ENCODE measurements at regions of chr6 and their contacts with region 1.

Region 1: DNA sequence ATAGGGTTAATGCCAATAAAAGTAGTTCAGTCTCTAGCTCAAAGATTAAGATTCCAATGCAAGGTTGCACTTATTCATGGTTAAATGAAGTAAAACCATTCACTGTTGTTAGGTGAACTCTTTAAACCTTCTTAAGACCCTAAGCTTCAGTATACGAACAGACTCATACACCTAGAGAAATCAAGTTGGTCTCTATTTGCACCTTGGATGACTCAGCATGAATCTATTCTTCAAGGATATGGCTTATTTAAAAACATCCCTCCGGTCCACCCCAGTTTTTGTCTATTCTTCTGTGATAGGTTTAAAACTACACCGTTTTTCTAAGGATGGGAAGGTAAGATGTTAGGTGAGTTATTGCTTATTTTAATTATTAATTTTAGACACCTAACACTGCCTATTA is 932 bp upstream of the TAAR9 start:
- DNase-seq: no peak
- H3K4me3 ChIP-seq: no peak overlapping the region
- H3K27ac ChIP-seq: no peak overlapping the region
- H3K4me1 ChIP-seq: no peaks in the 10 kb centered on the region
- H3K27me3 ChIP-seq: no peaks in the 10 kb centered on the region
- CTCF ChIP-seq: no peak
- POLR2A ChIP-seq: no peak

Region 2: DNA sequence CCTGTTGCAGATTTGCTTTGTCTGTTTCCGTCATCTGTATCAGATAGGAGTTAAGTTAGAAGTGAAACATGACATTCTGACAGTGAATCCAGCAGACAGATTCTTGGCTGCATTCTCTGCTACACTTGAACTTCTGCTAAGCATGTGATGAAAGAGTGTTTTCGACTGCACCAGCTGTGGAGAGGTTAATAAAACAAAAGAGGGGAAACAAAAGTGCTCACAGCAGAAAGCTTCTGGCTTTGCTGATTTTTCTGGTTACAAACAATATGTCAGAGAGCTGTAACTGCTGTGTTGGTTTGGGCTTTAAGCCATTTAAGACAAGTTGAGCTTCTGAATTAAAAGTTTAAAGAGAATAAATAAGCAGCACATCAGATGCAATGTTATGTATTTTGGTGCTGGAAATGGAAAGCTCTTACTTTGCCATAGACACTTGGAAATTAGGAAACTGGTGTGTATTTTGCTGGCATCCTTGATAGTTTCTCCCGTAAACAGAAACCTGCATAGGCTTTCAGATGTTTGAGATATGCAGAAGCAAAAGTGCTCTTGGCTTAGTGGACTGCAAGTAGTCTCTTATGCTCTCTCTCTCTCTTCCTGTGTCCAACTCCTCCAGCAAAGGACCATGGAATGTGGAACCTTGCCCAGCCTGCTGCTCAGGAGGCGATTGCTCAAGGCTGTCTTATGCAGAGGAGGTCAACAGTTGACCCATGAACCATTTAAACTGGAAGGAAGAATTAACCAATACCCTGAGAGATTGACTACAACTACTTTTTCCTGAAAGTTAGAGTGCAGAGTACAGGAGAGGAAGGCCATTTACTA is 382.1 kb after region 1 on chr6:
- intact Hi-C with region 1: no loop called
- DNase-seq: peak; percentile 32 to 64
- H3K4me3 ChIP-seq: peak overlapping the region in 1 of 3 donors; percentile 25
- H3K27ac ChIP-seq: peak overlapping the region in 1 of 2 donors; percentile 43
- H3K4me1 ChIP-seq: no peaks in the 10 kb centered on the region
- H3K27me3 ChIP-seq: no peaks in the 10 kb centered on the region
- CTCF ChIP-seq: no peak
- POLR2A ChIP-seq: no peak

Region 3: DNA sequence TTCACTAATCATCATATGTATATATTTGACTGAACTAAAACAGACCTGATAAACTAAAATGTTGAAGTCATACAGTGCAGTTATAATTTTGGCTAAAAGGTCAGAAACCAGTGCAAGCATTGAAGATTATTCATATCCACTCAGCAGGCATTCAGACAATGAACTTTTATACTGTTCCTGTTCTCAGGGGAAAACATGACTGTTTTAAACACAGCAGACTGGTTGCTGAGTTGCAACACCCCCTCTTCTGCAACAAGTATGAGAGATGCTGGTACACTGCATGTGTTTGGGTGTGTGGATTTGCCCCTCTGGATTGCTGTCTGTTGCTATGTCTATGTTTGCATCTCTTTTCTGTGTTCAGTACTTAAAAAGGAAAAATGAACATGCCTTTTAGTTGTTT is 910.8 kb after region 1 on chr6:
- intact Hi-C with region 1: loop called (anchors 5 kb)
- DNase-seq: no peak
- H3K4me3 ChIP-seq: no peak overlapping the region
- H3K27ac ChIP-seq: no peak overlapping the region
- H3K4me1 ChIP-seq: no peaks in the 10 kb centered on the region
- H3K27me3 ChIP-seq: no peaks in the 10 kb centered on the region
- CTCF ChIP-seq: no peak
- POLR2A ChIP-seq: no peak

Measured in breast epithelium (tissue), 4 donors.